ENCODE measurements at regions of chr3 and their contacts with region 1.

Region 1: DNA sequence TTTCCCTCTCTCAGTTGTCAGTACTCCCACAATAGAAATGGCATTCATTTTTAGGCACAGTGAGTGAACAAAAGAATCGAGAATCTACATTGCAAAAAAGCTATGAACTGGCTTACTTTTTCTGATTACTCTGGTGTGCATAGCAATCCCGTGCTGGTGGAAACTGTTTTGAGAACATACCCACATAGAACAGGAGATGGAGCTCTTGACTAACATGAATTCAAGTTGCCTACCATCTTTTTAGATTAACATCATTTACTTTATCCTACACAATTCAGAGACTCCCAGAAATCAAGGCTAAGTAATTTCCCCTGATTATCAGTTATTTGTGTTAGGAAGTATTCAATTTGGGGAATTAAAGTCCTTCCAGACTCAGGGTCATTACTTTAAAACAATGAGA is 326.6 kb downstream of the ARPP21 start:
- DNase-seq: peak; percentile 40
- H3K4me3 ChIP-seq: no peak overlapping the region
- CTCF ChIP-seq: peak; percentile 65

Region 2: GRCh38 chr3:35932995-35933394 is 32.9 kb before region 1 on chr3:
- in situ Hi-C with region 1: no loop called
- DNase-seq: peak; percentile 90
- H3K4me3 ChIP-seq: no peak overlapping the region
- CTCF ChIP-seq: no peak

Region 3: GRCh38 chr3:36149447-36149865 is 183.5 kb after region 1 on chr3:
- in situ Hi-C with region 1: no loop called
- DNase-seq: no peak
- H3K4me3 ChIP-seq: no peak overlapping the region
- CTCF ChIP-seq: no peak

Region 4: DNA sequence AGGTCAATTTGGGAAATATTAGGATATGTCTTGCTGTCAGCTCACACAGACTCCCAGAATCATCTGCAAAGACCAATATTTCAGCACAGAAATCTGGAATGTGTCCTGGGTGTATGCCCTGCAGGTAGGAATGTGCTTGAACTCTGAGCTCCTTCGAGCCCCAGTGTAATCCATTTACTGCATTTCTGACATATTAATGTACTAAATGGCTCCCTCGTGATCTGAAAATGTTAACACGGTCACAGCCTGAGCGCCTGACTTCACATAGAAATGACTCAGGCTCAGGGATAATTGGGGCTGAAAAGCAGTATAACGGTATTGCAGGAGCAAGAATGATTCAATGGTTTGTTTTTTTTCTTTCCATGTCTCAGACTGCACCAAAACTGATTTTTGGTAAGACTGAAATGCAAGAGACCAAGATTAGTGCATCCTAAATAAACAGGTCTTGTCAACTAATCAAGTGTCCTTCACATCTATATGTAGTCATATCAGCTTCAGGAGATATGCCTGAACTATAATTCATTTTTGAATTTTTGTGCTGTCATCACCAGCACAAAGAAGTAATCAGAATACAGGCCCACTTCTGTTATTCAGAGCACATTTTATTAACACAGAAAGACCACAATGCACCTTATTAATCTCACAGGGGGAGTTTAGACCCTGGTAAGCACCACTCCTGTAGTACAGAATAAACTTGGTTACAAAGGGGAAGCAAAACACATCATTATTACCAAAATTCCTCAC is 748.6 kb after region 1 on chr3:
- in situ Hi-C with region 1: loop called (anchors 5 kb)
- DNase-seq: no peak
- H3K4me3 ChIP-seq: no peak overlapping the region
- CTCF ChIP-seq: no peak

Measured in astrocyte of the cerebellum (primary cell).